Posterior vena cava (tissue), 2 donors: ENCODE measurements at regions of chr17 and their contacts with region 1.

Region 1: DNA sequence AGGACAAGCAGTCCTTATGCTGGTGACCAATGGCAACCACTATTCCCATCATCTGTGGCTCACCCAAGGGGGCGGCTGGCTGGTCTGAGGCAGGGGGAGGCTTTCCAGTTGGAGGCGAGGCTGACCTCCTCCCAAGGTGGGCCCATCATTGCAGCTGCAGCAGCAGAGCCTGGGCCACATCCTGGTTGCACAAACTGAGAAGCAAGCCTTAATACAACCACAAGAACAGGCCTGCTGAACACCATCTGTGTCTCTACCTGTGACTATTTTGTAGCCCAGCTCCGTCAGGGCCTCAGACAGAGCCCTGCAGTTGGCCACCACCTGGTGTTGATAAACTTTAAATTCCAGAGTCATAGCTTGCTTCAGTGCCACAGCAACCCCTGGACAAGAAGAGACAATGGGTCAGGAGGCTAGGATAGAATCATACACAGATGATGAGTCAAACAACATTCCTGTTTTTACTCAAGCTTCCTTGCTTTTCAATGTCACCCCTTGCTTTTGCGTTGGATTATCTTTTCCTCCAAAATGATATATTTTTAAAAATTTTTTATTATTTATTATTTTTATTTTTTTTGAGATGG is 17.9 kb downstream of the SMCR8 start:
- DNase-seq: no peak

Region 2: DNA sequence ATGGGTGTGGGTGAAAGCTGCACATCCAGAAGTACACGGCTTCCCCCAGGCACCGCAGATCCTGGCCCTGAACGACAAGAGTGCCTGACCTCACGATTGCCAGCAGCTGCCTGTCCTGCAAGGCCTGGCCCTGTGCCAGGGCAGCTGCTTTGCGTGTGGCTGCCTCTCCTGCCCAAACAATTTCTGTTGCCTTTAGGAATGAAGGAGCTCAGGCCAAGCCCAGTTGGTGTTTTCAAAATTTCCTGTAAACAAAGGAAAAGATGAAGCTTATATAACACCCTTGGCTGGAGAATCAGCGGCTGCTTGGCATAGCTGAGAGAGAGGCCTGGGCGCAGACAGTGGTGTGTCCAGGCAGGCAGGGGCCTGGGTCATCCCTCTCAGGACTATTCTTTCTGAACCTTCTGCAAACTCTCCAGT is 1395.1 kb after region 1 on chr17:
- intact Hi-C with region 1: loop called in 1 of 2 experiments (anchors 5 kb)
- DNase-seq: peak; percentile 91